ENCODE measurements at regions of chrX and their contacts with region 1.

Region 1: DNA sequence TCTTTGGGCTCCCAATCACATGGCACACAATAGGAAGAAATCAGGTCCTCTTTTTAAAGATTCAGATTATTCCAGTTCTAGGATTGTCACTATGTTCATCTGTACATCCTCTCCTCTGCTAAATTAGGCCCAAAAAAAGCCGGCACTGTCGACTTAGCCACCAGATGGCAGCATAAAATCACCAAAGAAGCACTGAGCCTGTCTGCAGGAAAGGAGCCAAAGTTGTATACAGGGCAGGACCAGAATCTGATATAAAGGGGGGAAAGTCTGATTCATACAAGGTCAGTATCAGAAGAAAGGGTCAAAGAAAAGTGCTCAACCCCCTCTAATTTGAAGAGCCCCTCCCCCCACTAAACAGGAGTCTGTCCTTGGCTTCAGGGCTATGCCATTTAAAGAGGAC is 292.5 kb downstream of the CHIC1 start:
- DNase-seq: no peak
- H3K4me3 ChIP-seq: no peak overlapping the region
- H3K27ac ChIP-seq: no peak overlapping the region
- H3K4me1 ChIP-seq: no peaks in the 10 kb centered on the region
- H3K27me3 ChIP-seq: no peaks in the 10 kb centered on the region
- CTCF ChIP-seq: peak; percentile 33 to 82 (median 63)
- POLR2A ChIP-seq: no peak

Region 2: GRCh38 chrX:74015379-74016019 is 160.0 kb after region 1 on chrX:
- intact Hi-C with region 1: loop called (anchors 5 kb)
- DNase-seq: no peak
- H3K4me3 ChIP-seq: no peak overlapping the region
- H3K27ac ChIP-seq: no peak overlapping the region
- H3K4me1 ChIP-seq: peaks cover 0 to 6% (median 0%) of the 10 kb centered on the region in 6 donors
- H3K27me3 ChIP-seq: no peaks in the 10 kb centered on the region
- CTCF ChIP-seq: peak; percentile 38 to 88 (median 70)
- POLR2A ChIP-seq: no peak

Region 3: GRCh38 chrX:74133156-74133796 is 277.7 kb after region 1 on chrX:
- intact Hi-C with region 1: loop called (anchors 5 kb)
- DNase-seq: no peak
- H3K4me3 ChIP-seq: no peak overlapping the region
- H3K27ac ChIP-seq: no peak overlapping the region
- H3K4me1 ChIP-seq: no peaks in the 10 kb centered on the region
- H3K27me3 ChIP-seq: no peaks in the 10 kb centered on the region
- CTCF ChIP-seq: peak in 10 of 11 experiments; percentile 53 to 77 (median 62)
- POLR2A ChIP-seq: no peak

Region 4: DNA sequence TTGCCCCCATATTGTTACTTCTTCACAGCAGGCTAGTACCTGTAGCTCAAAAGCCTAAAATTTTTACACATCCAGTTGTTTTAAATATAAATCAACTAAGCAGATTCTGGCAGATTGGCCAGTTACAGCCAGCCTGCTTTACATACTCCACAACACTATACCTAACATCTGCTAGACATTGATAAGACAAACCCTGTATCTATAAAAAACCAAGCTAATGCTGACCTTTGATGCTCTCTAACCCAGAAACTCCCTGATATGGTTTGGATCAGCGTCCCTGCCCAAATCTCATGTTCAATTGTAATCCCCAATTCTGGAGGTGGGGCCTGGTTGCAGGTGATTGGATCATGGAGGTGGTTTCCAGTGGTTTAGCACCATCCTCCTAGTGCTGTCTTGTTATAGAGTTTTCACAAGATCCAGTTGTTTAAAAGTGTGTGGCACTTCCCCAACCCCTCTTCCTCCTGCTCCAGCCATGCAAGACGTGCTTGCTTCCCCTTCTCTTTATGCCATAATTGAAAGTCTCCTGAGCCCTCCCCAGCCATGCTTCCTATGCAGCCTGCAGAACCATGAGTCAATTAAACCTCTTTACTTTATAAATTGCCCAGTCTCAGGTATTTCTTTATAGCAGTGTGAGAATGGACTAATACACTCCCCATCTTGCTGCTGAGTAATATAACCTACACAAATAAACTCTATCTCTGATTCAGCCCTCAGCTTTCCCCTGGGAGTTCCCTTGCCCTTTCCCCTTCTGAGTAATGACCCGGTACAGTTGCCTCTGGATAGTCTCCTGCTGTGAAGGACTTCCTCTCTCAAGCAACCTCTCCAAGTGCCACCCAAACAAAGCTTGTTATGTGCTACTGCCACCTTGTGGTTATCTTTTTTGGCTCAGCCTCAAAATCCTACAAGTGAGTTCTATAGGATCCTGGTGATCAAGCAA is 488.1 kb after region 1 on chrX:
- intact Hi-C with region 1: loop called (anchors 10 kb)
- DNase-seq: no peak
- H3K4me3 ChIP-seq: no peak overlapping the region
- H3K27ac ChIP-seq: no peak overlapping the region
- H3K4me1 ChIP-seq: peaks cover 0 to 8% (median 4%) of the 10 kb centered on the region in 6 donors
- H3K27me3 ChIP-seq: peaks cover 0 to 8% (median 0%) of the 10 kb centered on the region in 7 donors
- CTCF ChIP-seq: peak in 10 of 11 experiments; percentile 12 to 68 (median 59)
- POLR2A ChIP-seq: no peak

Region 5: GRCh38 chrX:74550295-74550802 is 694.8 kb after region 1 on chrX:
- intact Hi-C with region 1: loop called (anchors 10 kb)
- DNase-seq: peak; percentile 95
- H3K4me3 ChIP-seq: peak overlapping the region in 2 of 8 donors; percentile 10 to 12
- H3K27ac ChIP-seq: peak overlapping the region in 2 of 8 donors; percentile 10 to 16
- H3K4me1 ChIP-seq: peaks cover 0 to 7% (median 0%) of the 10 kb centered on the region in 6 donors
- H3K27me3 ChIP-seq: peaks cover 0 to 15% (median 0%) of the 10 kb centered on the region in 7 donors
- CTCF ChIP-seq: peak; percentile 93 to 99 (median 94)
- POLR2A ChIP-seq: no peak

Measured in spleen (tissue), 13 donors.